ENCODE measurements at regions of chr17 and their contacts with region 1.

Region 1: DNA sequence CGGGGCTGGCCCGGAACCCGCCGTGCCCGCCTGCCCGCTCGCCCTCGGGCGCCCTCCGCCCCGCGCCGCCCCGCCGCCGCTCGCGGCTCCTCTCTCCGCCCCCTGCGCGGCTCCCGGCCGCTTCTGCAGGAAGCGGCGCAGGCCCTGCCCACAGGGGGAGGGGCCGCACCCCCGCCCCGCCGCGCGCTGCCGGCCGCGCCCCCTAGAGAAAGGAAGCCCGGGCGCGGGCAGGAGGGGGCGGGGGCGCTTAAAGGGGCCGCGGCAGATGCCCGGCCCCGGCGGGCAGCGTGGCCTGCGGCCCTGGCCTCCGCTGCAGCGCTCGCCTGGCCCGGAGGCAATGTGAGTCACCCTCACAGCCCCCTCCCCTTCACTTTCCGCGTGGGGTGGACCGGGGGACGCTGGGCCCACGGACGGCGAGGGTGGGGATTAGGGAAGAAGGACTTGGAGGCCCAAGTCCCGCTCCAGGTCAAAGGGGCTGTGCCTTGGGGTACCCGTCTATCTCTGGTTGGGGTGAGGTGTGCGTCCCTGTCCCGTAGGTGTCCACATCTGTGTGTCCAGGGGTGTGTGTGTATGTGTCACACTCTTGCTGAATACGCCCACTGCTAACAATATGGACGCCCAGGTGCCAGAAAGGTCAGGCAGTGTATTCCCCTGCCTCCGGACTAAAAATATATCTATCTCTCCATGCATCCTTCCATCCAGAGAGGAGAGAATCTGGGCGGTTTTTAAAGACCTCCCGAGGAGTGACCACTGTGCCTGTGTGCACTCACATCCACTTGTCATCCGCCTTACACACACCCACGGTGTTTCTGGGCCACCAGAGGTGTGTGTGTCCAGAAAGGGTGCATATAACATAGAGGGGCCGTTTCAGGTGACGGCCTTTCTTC is at the start of gene GIT1:
- DNase-seq: peak; percentile 83
- H3K4me3 Mint-ChIP-seq: peak within 1 kb of the TSS; percentile 83
- H3K27ac Mint-ChIP-seq: peak within 1 kb of the TSS; percentile 82
- H3K4me1 Mint-ChIP-seq: peaks cover 23% of the 10 kb centered on the region
- H3K27me3 Mint-ChIP-seq: no peaks in the 10 kb centered on the region
- CTCF ChIP-seq: no peak
- total RNA-seq, gene GIT1: 49.0 and 52.6 TPM in 2 replicates

Region 2: GRCh38 chr17:28571255-28572122 is 1018.3 kb before region 1 on chr17 and contains the start of gene PIGS:
- CTCF ChIA-PET with region 1: no interaction called
- POLR2A ChIA-PET with region 1: no interaction called
- intact Hi-C with region 1: no loop called
- DNase-seq: peak; percentile 91
- H3K4me3 Mint-ChIP-seq: peak within 1 kb of the TSS; percentile 93
- H3K27ac Mint-ChIP-seq: peak within 1 kb of the TSS; percentile 85
- H3K4me1 Mint-ChIP-seq: peaks cover 24% of the 10 kb centered on the region
- H3K27me3 Mint-ChIP-seq: no peaks in the 10 kb centered on the region
- CTCF ChIP-seq: no peak
- total RNA-seq, gene PIGS: 50.5 and 56.1 TPM in 2 replicates

Region 3: GRCh38 chr17:29389982-29390850 is 199.6 kb before region 1 on chr17 and contains the start of gene TAOK1:
- CTCF ChIA-PET with region 1: no interaction called
- POLR2A ChIA-PET with region 1: interaction called, 17 read pairs
- intact Hi-C with region 1: no loop called
- DNase-seq: peak; percentile 98
- H3K4me3 Mint-ChIP-seq: peak within 1 kb of the TSS; percentile 96
- H3K27ac Mint-ChIP-seq: peak within 1 kb of the TSS; percentile 94
- H3K4me1 Mint-ChIP-seq: peaks cover 30% of the 10 kb centered on the region
- H3K27me3 Mint-ChIP-seq: no peaks in the 10 kb centered on the region
- CTCF ChIP-seq: no peak
- total RNA-seq, gene TAOK1: 68.7 and 84.2 TPM in 2 replicates

Region 4: DNA sequence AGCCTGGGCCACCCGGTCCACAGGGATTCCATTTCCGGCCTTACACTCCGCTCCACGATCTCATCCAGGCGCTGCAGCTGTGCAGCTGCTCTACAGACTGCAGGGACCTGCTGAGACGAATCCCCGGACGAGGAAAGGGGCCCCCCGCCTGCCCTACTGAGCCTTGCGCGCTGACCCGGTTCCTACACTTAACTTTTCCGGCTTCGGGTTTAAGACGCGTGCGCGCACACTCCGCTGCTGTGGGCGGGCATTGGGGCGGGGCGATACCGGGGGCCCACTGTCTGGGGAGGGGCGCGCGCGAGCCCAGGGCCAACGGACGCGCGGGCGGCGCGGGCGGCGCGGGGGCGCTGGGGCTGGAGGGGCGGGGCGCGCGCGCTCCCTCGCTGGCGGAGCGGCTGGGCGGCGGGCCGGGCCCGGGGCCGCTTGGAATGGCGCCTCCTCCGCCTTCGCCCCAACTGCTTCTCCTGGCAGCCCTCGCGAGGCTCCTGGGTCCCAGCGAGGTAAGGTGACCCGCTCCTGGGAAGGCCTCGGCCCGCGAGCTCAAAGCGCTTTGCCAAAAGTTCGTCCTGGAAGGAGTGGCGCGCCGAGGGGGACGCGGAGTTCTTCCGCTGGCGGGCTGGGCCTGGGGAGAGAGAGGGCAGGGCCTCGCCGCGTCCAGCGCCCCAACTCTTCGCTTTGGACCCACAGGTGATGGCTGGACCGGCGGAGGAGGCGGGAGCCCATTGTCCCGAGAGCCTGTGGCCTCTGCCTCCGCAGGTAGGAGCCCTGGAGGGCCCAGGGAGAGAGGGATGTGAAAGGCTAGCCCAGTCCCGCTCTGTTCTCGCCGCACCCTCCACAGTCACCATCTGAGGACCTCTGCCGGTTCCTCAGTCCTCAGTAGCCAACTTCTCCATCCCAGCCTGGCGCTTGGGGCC is 21.2 kb before region 1 on chr17 and contains the start of gene TP53I13:
- CTCF ChIA-PET with region 1: interaction called, 57 read pairs
- POLR2A ChIA-PET with region 1: interaction called, 43 read pairs
- intact Hi-C with region 1: loop called (anchors 2 kb)
- DNase-seq: peak; percentile 78
- H3K4me3 Mint-ChIP-seq: peak within 1 kb of the TSS; percentile 80
- H3K27ac Mint-ChIP-seq: peak within 1 kb of the TSS; percentile 78
- H3K4me1 Mint-ChIP-seq: peaks cover 14% of the 10 kb centered on the region
- H3K27me3 Mint-ChIP-seq: no peaks in the 10 kb centered on the region
- CTCF ChIP-seq: no peak
- total RNA-seq, gene TP53I13: 29.6 and 34.5 TPM in 2 replicates

Region 5: DNA sequence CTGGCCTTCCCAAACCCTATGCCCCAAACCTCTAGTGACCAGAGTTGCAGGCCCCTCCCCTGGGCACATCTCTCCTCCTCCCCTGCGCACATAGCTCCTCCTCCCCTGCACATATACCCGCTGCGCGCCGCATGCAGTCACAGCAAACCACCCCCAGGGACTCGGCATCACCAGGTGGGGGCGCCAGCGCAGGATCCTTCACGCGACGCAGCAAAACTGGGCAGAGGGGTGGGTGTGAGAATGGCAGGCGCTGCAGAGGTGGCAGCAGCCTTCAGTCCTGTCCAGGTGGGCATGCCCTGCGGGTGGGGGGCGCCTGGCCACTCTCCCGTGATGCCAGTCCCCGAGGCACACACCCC is 27.3 kb after region 1 on chr17:
- CTCF ChIA-PET with region 1: interaction called, 11 read pairs
- POLR2A ChIA-PET with region 1: interaction called, 6 read pairs
- intact Hi-C with region 1: no loop called
- DNase-seq: no peak
- H3K4me3 Mint-ChIP-seq: no peak overlapping the region
- H3K27ac Mint-ChIP-seq: no peak overlapping the region
- H3K4me1 Mint-ChIP-seq: peaks cover 24% of the 10 kb centered on the region
- H3K27me3 Mint-ChIP-seq: no peaks in the 10 kb centered on the region
- CTCF ChIP-seq: peak; percentile 24

Region 6: DNA sequence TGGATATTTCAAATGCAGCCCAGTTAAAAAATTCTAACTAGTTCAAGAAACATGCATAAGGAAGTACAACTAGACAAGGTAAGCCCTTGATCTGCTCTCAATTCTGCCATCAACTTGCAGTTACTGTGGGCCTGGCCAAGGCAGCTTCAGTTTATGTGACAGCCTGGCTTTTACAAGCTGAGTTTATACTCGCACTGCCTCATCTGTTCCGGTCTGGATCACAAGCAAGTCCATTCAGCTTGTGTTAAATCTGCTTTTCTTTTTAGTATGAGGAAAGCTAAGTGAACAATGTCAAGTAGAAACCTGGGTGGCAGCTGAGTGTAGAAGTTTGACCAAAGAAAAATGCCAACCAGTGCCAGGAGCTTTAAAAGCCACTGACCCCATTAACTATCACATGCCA is 109.5 kb after region 1 on chr17:
- CTCF ChIA-PET with region 1: no interaction called
- POLR2A ChIA-PET with region 1: no interaction called
- intact Hi-C with region 1: no loop called
- DNase-seq: no peak
- H3K4me3 Mint-ChIP-seq: no peak overlapping the region
- H3K27ac Mint-ChIP-seq: no peak overlapping the region
- H3K4me1 Mint-ChIP-seq: no peaks in the 10 kb centered on the region
- H3K27me3 Mint-ChIP-seq: no peaks in the 10 kb centered on the region
- CTCF ChIP-seq: no peak